Right ventricle myocardium superior (tissue), 1 donor: ENCODE measurements at regions of chr12 and their contacts with region 1.

Region 1: DNA sequence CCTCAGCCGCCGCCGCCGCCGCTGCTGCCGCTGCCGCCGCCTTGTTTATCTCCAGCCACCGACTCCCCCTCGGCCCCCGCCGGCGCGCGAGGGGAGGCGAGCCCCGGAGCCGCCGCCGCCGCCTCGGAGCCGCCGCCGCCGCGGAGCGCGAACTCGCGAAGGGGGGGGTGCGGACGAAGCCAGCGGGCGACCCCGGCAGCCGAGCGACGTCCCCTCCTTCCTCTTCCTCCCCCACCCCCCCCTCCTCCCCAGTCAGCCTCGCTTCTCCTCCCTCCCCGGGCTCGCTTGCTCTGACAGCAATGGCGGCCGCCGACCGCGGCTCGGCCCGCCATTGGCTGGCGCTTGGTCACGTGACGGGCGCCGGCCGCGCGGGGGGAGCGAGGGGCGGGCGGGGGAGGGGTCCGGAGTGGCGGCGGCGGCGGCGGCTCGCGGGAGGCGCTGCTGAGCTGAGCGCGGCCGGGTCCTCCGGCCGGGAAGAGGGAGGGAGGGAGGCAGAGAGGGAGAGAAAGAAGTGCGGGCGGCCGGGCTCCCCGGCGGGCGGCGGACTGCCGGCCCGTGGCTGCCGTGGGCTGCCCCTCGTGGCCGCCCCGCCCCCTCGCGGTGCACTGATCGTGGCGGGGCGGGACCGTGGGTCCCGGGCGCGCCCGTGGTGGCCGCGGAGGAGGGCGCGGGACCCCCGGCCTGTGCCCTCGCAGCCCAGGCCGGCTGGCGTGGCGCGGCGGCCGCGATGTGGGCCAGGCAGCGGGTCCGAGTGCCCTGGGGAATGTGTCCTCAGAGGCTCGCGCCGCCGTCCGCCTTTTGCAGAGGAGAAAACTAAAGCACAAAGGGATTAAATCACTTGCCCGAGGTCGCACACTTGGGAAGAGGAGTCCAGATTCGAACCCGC is at the start of gene MED13L:
- DNase-seq: peak; percentile 93
- ATAC-seq: peak; percentile 93
- total RNA-seq, gene MED13L: 57.7 TPM

Region 2: GRCh38 chr12:116423094-116423493 is 145.5 kb after region 1 on chr12:
- intact Hi-C with region 1: no loop called
- DNase-seq: no peak
- ATAC-seq: peak; percentile 42

Region 3: GRCh38 chr12:116434155-116435011 is 156.7 kb after region 1 on chr12:
- intact Hi-C with region 1: loop called (anchors 10 kb)
- DNase-seq: peak; percentile 90
- ATAC-seq: peak; percentile 93

Region 4: GRCh38 chr12:116448164-116448739 is 170.6 kb after region 1 on chr12:
- intact Hi-C with region 1: no loop called
- DNase-seq: no peak
- ATAC-seq: no peak